Mucosa of descending colon (tissue), 3 donors: ENCODE measurements at regions of chr12 and their contacts with region 1.

Region 1: GRCh38 chr12:128069359-128069997 is 197.5 kb upstream of the TMEM132C start:
- DNase-seq: peak in 2 of 3 donors; percentile 53 to 83
- ATAC-seq: peak; percentile 84
- H3K4me3 ChIP-seq: no peak overlapping the region
- H3K4me1 ChIP-seq: peaks cover 2% of the 10 kb centered on the region
- CTCF ChIP-seq: peak; percentile 19

Region 2: GRCh38 chr12:127677537-127678131 is 391.8 kb before region 1 on chr12:
- intact Hi-C with region 1: loop called in 1 of 2 experiments (anchors 2 kb)
- DNase-seq: peak in 2 of 3 donors; percentile 53 to 79
- ATAC-seq: peak; percentile 68
- H3K4me3 ChIP-seq: no peak overlapping the region
- H3K4me1 ChIP-seq: no peaks in the 10 kb centered on the region
- CTCF ChIP-seq: peak; percentile 50